ENCODE measurements at regions of chr6 and their contacts with region 1.

Region 1: GRCh38 chr6:10429638-10430427 is 15.0 kb upstream of the TFAP2A start:
- DNase-seq: no peak
- ATAC-seq: peak; percentile 83

Region 2: DNA sequence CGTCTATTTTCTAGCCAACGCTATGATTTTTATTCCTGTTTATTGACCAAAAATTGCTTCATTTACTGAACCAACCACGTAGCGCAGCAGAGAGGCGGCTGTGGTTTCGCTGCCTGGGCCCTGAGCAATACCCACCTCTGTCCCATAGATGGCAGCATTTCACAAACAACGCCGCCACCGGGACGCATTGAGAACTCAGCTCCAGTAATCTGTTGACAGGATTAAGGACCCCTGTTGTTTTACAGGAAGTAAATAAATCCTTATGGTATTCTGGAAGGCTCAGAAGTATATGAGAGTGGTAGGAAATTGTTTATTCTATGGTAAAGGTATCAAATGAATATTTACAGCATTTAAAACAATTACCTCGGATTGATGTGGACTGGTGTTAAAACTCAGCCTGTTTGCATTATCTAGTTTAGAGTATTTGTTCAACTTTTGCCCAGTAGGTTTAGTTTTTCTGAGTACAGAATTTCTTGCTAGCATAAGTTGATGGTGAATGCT is 1446.6 kb before region 1 on chr6:
- intact Hi-C with region 1: loop called in 1 of 2 experiments (anchors 10 kb)
- DNase-seq: peak in 1 of 2 donors; percentile 51
- ATAC-seq: peak; percentile 89

Region 3: DNA sequence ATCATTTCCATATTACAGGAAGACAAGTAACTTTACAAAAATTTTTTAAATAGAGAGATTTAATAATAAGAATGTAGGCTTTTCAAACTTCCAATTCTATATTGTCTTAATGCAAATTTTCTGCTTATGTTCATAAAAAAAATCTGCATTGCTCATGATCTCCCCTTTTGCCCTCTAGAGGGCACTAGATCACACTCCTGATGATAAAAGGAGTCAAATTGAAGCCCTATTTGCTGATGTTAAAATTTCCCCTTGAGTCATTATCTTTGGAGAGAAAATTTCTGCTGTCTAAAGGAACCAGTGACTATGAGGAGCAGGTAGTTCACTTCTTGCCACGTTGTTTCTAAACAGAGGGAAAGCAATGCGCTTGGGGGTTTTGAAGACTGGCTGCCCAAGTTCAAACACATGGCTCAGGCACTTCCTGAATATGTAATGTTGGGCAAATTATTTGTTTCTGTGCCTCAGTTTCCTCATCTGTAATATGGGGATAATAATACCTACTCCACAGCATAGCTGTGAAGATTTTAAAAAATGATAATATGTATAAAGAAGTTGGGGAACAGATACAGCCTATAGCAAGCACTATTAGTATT is 889.2 kb before region 1 on chr6:
- intact Hi-C with region 1: loop called in 1 of 2 experiments (anchors 10 kb)
- DNase-seq: no peak
- ATAC-seq: no peak

Region 4: DNA sequence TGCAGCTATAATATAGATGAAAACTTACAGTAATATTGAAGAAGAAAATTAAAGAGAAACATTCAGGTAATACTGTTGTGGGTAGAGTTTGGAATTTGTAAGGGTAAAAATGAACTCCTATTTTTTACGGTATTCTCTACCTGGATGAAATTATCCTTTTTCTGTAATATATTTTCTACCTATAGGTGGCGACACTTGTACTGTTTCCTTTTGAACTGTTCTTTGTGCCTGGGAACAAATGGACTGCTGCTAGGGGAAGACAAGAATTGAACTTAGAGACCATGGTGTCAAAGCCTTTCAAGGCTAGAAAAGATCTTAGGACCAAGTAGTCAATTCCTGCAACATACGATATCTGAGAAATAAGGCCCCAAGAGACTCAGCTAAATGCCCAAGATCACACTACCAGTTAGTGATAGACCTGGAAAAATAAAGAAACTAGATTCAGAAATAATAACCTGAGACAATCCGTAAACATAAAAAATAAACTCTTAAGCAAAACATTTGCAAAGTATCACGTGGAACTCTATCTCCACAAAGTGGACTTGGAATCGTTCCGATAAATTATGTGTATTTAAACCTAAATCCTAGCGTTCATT is 398.8 kb before region 1 on chr6:
- intact Hi-C with region 1: loop called in 1 of 2 experiments (anchors 10 kb)
- DNase-seq: no peak
- ATAC-seq: no peak

Measured in left colon (tissue), 2 donors.